Caco-2 (cell line): ENCODE measurements at regions of chr11 and their contacts with region 1.

Region 1: DNA sequence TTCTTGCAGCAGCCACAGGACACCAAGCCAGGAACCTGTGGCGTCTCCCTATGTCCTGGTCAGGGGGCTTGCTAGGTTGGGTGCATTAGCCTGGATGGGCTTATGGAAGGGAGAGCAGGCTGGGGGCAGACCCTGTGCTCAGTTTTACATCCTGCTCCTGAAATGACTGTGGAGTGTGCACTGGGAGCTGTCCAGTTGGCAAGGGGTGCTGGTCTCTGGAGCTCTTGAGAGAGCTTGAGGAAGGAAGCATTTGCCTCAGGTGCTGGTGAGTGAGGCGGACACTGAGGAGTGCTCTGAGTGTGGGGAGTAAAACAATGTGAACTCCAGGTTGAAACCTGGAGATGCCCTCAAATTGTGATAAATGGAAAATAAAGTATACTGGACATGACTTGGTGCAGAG is 3.4 kb downstream of the SCGB1D4 start:
- DNase-seq: peak in 1 of 2 experiments; percentile 58
- H3K4me3 ChIP-seq: no peak overlapping the region
- H3K4me3 Mint-ChIP-seq: no peak overlapping the region
- H3K27ac Mint-ChIP-seq: no peak overlapping the region
- H3K4me1 ChIP-seq: no peaks in the 10 kb centered on the region
- H3K4me1 Mint-ChIP-seq: no peaks in the 10 kb centered on the region
- H3K27me3 ChIP-seq: peaks cover 3% of the 10 kb centered on the region; the same call in 1 of the 2 replicates
- H3K27me3 Mint-ChIP-seq: peaks cover 10% of the 10 kb centered on the region
- CTCF ChIP-seq: no peak

Region 2: GRCh38 chr11:62081378-62082291 is 213.9 kb before region 1 on chr11:
- CTCF ChIA-PET with region 1: no interaction called
- POLR2A ChIA-PET with region 1: no interaction called
- intact Hi-C with region 1: no loop called
- DNase-seq: peak; percentile 71 to 87
- H3K4me3 ChIP-seq: no peak overlapping the region
- H3K4me3 Mint-ChIP-seq: no peak overlapping the region
- H3K27ac Mint-ChIP-seq: no peak overlapping the region
- H3K4me1 ChIP-seq: no peaks in the 10 kb centered on the region
- H3K4me1 Mint-ChIP-seq: no peaks in the 10 kb centered on the region
- H3K27me3 ChIP-seq: no peaks in the 10 kb centered on the region; the same call in 1 of the 2 replicates
- H3K27me3 Mint-ChIP-seq: no peaks in the 10 kb centered on the region
- CTCF ChIP-seq: peak; percentile 89 to 91

Region 3: GRCh38 chr11:62201370-62201769 is 94.1 kb before region 1 on chr11:
- CTCF ChIA-PET with region 1: no interaction called
- POLR2A ChIA-PET with region 1: no interaction called
- intact Hi-C with region 1: no loop called
- DNase-seq: no peak
- H3K4me3 ChIP-seq: no peak overlapping the region
- H3K4me3 Mint-ChIP-seq: no peak overlapping the region
- H3K27ac Mint-ChIP-seq: no peak overlapping the region
- H3K4me1 ChIP-seq: no peaks in the 10 kb centered on the region
- H3K4me1 Mint-ChIP-seq: no peaks in the 10 kb centered on the region
- H3K27me3 ChIP-seq: 0 out of 2 replicates have a peak, but pooled peaks cover 1% of the 10 kb centered on the region
- H3K27me3 Mint-ChIP-seq: peaks cover 27% of the 10 kb centered on the region
- CTCF ChIP-seq: no peak

Region 4: DNA sequence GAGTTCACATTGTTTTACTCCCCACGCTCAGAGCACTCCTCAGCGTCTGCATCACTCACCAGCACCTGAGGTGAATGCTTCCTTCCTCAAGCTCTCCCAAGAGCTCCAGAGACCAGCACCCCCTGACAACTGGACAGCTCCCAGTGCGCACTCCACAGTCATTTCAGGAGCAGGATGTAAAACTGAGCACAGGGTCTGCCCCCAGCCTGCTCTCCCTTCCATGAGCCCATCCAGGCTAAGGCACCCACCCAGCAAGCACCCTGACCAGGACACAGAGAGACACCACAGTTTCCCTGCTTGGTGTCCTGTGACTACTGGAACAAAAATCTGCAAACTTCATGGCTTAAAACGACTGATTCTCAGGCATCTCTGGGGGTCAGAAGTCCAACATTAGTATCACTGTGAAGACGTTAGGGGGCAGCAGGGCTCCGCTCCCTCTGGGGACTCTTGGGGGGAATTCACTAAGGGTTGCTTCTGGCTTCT is 50.2 kb before region 1 on chr11:
- CTCF ChIA-PET with region 1: interaction called, 3 read pairs
- POLR2A ChIA-PET with region 1: no interaction called
- intact Hi-C with region 1: loop called (anchors 5 kb)
- DNase-seq: peak; percentile 73 to 77
- H3K4me3 ChIP-seq: no peak overlapping the region
- H3K4me3 Mint-ChIP-seq: no peak overlapping the region
- H3K27ac Mint-ChIP-seq: no peak overlapping the region
- H3K4me1 ChIP-seq: no peaks in the 10 kb centered on the region
- H3K4me1 Mint-ChIP-seq: no peaks in the 10 kb centered on the region
- H3K27me3 ChIP-seq: no peaks in the 10 kb centered on the region
- H3K27me3 Mint-ChIP-seq: peaks cover 9% of the 10 kb centered on the region
- CTCF ChIP-seq: peak; percentile 37 to 45